ENCODE measurements at regions of chr2 and their contacts with region 1.

Region 1: DNA sequence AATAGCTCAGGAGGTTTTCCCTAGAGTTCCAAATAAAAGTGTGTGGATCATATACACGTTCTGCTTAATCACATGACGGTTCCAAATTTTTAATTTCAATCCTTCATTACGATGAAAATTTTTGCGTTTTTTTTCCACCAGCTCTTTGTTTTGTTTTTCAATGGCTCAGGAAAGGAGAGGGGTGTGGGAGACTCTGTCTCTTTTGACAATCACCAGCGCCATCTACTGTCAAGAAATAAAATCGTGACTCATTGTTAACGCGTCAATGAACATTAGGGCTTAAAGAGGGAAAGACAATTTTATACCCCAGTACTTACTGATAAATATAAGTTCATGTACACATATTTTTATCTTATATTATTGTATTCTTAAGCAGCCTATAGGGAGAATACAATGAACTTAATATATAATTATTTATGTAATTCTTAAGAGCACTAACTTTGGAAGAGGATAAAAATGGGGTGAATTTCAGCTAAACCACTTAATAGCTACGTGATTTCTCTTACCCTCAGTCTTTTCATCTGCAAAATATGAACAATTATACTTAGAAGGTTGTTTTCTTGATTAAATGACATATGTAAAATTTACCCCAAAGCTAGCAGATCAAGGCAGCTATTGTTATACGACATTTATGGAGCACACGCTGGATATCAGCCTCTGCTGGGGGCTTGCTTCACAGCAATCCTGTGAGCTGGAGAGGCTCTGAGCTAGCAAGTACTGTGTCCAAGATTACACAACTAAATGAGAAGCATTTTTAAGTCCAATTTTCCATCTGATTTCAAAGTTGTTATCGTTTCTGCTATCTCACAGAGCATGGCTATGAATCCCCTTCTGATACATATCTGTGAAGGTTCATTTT is 47.4 kb upstream of the RMDN2 start:
- DNase-seq: peak; percentile 40
- ATAC-seq: peak; percentile 72
- H3K4me3 Mint-ChIP-seq: no peak overlapping the region
- H3K27ac Mint-ChIP-seq: no peak overlapping the region
- H3K4me1 Mint-ChIP-seq: peaks cover 9% of the 10 kb centered on the region
- H3K27me3 Mint-ChIP-seq: peaks cover 13% of the 10 kb centered on the region

Region 2: GRCh38 chr2:37389989-37390765 is 487.5 kb before region 1 on chr2:
- CTCF ChIA-PET with region 1: interaction called, 135 read pairs
- POLR2A ChIA-PET with region 1: no interaction called
- DNase-seq: peak; percentile 73
- ATAC-seq: peak; percentile 94
- H3K4me3 Mint-ChIP-seq: no peak overlapping the region
- H3K27ac Mint-ChIP-seq: peak overlapping the region; percentile 28
- H3K4me1 Mint-ChIP-seq: peaks cover 4% of the 10 kb centered on the region
- H3K27me3 Mint-ChIP-seq: peaks cover 6% of the 10 kb centered on the region

Region 3: DNA sequence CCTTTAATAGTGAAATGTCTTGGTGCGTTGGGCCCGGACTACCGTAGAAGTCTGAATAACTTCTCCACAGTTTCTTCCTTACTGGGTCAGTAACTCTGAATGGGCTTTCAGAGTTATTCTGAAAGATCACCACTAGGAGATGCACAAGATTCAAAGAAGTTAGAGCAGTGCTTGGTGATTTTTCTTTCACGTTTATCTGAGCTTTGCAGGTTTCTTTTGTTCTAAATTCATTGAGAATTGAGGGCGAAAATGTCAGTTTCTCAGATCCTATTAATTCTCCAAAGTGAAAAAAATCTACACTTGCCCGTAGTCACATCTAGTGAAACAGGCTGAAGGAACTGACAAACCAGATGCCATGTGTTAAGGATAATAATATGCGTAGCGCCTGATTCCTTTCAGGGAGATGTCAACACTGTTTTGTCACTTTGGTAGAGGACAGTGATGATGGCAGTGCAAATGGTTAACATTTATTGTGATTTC is 463.2 kb before region 1 on chr2:
- CTCF ChIA-PET with region 1: interaction called, 73 read pairs
- POLR2A ChIA-PET with region 1: no interaction called
- DNase-seq: no peak
- ATAC-seq: peak; percentile 64
- H3K4me3 Mint-ChIP-seq: no peak overlapping the region
- H3K27ac Mint-ChIP-seq: no peak overlapping the region
- H3K4me1 Mint-ChIP-seq: peaks cover 4% of the 10 kb centered on the region
- H3K27me3 Mint-ChIP-seq: peaks cover 8% of the 10 kb centered on the region

Region 4: DNA sequence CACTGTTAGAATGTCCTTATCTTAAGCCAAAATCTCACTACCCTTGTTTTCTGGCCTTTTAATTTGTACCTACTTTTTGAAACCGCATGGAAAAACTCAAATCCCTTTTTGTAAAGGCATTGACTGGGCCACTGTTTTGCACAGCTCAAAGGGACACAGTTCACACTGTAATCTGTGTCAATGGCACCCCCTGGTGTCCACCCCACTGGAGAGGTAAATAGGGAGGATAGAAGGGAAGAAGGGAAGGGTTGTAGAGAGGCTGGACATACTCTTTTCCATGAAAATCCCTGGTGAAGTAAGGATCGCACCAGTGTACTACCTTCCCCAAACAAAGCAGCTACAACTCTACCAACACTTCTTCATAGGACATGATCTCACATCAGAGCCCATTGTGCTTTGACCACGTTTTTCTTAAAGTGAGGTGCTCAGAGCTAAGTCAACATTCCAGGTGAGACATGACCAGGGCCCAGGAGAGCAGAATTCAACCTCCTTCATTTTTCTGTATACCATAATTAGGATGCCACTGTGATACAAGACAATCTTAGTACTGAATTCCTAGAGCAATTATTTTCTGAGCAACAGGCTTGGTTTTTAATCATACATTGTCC is 45.0 kb before region 1 on chr2:
- CTCF ChIA-PET with region 1: interaction called, 20 read pairs
- POLR2A ChIA-PET with region 1: no interaction called
- DNase-seq: peak; percentile 86
- ATAC-seq: peak; percentile 91
- H3K4me3 Mint-ChIP-seq: no peak overlapping the region
- H3K27ac Mint-ChIP-seq: no peak overlapping the region
- H3K4me1 Mint-ChIP-seq: peaks cover 17% of the 10 kb centered on the region
- H3K27me3 Mint-ChIP-seq: no peaks in the 10 kb centered on the region

Region 5: GRCh38 chr2:37890893-37891495 is 13.3 kb after region 1 on chr2:
- CTCF ChIA-PET with region 1: interaction called, 23 read pairs
- POLR2A ChIA-PET with region 1: no interaction called
- DNase-seq: peak; percentile 76
- ATAC-seq: peak; percentile 77
- H3K4me3 Mint-ChIP-seq: no peak overlapping the region
- H3K27ac Mint-ChIP-seq: no peak overlapping the region
- H3K4me1 Mint-ChIP-seq: peaks cover 37% of the 10 kb centered on the region
- H3K27me3 Mint-ChIP-seq: peaks cover 9% of the 10 kb centered on the region

Region 6: DNA sequence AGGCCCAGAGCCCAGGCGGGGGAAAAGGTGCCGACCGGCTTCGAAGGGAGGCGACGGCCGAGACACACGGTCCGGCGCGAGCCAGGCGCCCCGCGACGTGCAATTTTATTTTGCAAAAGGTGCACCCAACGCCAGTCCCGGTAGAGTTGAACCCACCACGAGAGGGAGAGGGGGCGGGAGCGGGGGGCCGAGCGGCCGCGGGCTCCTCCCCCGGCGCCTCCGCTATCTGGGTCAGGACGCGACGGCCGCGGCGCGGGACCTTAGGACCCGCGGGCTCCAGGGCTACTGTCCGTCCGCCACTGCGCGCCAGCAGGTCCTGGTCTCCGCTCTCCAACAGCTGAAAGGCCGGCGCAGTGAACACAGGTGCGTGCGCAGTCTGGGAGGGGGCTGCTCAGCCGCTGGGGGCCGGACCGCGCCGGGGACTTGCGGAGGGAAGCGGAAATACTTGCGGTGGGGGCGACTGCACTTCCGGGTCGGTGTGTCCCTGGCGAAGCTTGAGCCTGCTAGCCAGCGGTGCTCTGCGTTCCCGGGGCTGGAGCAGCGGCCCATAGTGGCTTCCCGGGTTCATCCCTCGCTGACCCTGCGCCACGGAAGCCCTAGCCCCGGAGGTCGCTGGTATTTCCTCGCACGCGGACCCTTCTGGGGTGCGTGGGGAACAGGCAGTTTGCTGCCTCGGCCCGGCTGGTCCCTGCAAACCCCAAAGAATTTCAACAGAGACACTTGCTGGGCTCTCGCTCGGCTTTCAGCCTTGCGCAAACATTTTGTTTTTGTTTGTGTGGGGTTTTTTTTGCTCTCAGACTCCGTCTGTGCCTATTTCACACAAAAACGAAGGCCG is 47.6 kb after region 1 on chr2 and contains the start of gene RMDN2:
- CTCF ChIA-PET with region 1: interaction called, 10 read pairs
- POLR2A ChIA-PET with region 1: no interaction called
- DNase-seq: peak; percentile 90
- ATAC-seq: peak; percentile 82
- H3K4me3 Mint-ChIP-seq: peak within 1 kb of the TSS; percentile 89
- H3K27ac Mint-ChIP-seq: peak within 1 kb of the TSS; percentile 91
- H3K4me1 Mint-ChIP-seq: peaks cover 12% of the 10 kb centered on the region
- H3K27me3 Mint-ChIP-seq: peaks cover 22% of the 10 kb centered on the region
- total RNA-seq, gene RMDN2: 1.9 to 2.2 TPM

Measured in activated CD8-positive, alpha-beta T cell treated with anti-CD3 and anti-CD28 coated beads, Interleukin-2, amount 10 ng/mL, durations not matched to agents 7 days and 5 days (primary cell).